Calu3 (cell line): ENCODE measurements at regions of chr9 and their contacts with region 1.

Region 1: GRCh38 chr9:122453677-122454135 is 24.0 kb downstream of the OR1J1 start:
- DNase-seq: no peak
- H3K4me3 Mint-ChIP-seq: no peak overlapping the region
- H3K27ac Mint-ChIP-seq: no peak overlapping the region
- H3K4me1 Mint-ChIP-seq: no peaks in the 10 kb centered on the region
- H3K27me3 Mint-ChIP-seq: peaks cover 33% of the 10 kb centered on the region
- CTCF ChIP-seq: no peak

Region 2: DNA sequence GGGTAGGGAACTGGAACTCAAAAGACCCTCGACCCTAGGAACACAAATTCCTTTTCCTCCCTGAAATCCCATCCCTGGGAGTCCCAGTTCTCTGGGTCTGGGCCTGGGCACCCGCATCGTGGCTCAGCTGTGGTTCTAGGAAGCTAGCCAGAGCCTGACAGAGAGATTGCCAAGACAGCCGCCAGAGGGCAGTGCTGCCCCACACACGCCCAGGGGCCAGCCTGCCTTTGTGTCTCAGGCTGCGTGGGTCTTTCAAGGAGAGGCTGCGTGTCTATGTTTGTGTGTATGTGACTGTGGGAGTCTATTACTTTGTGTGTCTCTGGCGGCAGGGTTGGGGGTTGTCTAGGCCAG is 328.6 kb before region 1 on chr9:
- CTCF ChIA-PET with region 1: no interaction called
- intact Hi-C with region 1: loop called (anchors 1 kb)
- DNase-seq: peak; percentile 78
- H3K4me3 Mint-ChIP-seq: no peak overlapping the region
- H3K27ac Mint-ChIP-seq: no peak overlapping the region
- H3K4me1 Mint-ChIP-seq: peaks cover 16% of the 10 kb centered on the region
- H3K27me3 Mint-ChIP-seq: peaks cover 40% of the 10 kb centered on the region
- CTCF ChIP-seq: peak; percentile 67

Region 3: DNA sequence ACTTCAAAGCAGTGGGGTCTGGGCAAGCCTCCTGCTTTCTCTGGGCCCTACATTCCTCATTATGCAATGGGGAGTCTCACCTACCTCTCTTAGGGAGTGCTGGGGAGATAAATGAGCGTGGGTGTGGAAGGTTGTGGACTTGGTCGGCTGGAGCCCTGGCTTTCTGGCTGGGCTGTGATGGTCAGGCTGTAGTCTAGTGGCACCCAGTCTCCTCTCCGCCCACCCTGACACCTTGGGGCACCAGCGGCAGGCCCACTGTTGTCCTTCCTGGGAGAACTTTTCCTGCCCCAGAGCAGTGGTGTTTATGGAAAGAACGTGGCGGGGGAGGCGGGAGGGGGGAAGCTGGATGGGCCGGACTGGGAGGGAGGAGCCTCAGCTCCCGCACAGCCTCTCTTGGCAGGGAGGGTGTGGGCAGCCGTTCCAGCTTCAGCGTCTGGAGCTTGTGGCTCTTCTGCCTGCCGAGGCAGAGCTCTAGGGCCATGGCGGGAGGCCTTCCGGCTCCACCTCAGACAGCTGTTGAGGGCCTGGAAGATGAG is 78.8 kb before region 1 on chr9:
- CTCF ChIA-PET with region 1: no interaction called
- intact Hi-C with region 1: loop called (anchors 5 kb)
- DNase-seq: no peak
- H3K4me3 Mint-ChIP-seq: no peak overlapping the region
- H3K27ac Mint-ChIP-seq: no peak overlapping the region
- H3K4me1 Mint-ChIP-seq: peaks cover 16% of the 10 kb centered on the region
- H3K27me3 Mint-ChIP-seq: peaks cover 19% of the 10 kb centered on the region
- CTCF ChIP-seq: no peak

Region 4: DNA sequence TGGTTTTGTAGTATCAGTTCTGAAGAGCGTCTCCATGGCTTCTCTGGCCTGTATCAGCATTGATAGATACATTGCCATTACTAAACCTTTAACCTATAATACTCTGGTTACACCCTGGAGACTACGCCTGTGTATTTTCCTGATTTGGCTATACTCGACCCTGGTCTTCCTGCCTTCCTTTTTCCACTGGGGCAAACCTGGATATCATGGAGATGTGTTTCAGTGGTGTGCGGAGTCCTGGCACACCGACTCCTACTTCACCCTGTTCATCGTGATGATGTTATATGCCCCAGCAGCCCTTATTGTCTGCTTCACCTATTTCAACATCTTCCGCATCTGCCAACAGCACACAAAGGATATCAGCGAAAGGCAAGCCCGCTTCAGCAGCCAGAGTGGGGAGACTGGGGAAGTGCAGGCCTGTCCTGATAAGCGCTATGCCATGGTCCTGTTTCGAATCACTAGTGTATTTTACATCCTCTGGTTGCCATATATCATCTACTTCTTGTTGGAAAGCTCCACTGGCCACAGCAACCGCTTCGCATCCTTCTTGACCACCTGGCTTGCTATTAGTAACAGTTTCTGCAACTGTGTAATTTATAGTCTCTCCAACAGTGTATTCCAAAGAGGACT is 581.3 kb after region 1 on chr9:
- CTCF ChIA-PET with region 1: no interaction called
- intact Hi-C with region 1: no loop called
- DNase-seq: no peak
- H3K4me3 Mint-ChIP-seq: no peak overlapping the region
- H3K27ac Mint-ChIP-seq: no peak overlapping the region
- H3K4me1 Mint-ChIP-seq: no peaks in the 10 kb centered on the region
- H3K27me3 Mint-ChIP-seq: no peaks in the 10 kb centered on the region
- CTCF ChIP-seq: no peak